Activated CD4-positive, alpha-beta memory T cell treated with anti-CD3 and anti-CD28 coated beads, Interleukin-2, amount 10 ng/mL, durations not matched to agents 7 days and 5 days (primary cell): ENCODE measurements at regions of chr11 and their contacts with region 1.

Region 1: GRCh38 chr11:535519-536454 is at the start of gene HRAS:
- DNase-seq: peak; percentile 96
- H3K4me3 Mint-ChIP-seq: peak within 1 kb of the TSS; percentile 84
- H3K27ac Mint-ChIP-seq: peak within 1 kb of the TSS; percentile 90
- H3K4me1 Mint-ChIP-seq: peaks cover 28% of the 10 kb centered on the region
- H3K27me3 Mint-ChIP-seq: no peaks in the 10 kb centered on the region
- total RNA-seq, gene HRAS: 45.1 to 52.5 TPM

Region 2: GRCh38 chr11:518463-519250 is 17.1 kb before region 1 on chr11:
- CTCF ChIA-PET with region 1: interaction called, 11 read pairs
- POLR2A ChIA-PET with region 1: interaction called, 4 read pairs
- DNase-seq: peak; percentile 94
- H3K4me3 Mint-ChIP-seq: peak overlapping the region; percentile 66
- H3K27ac Mint-ChIP-seq: peak overlapping the region; percentile 47
- H3K4me1 Mint-ChIP-seq: peaks cover 13% of the 10 kb centered on the region
- H3K27me3 Mint-ChIP-seq: no peaks in the 10 kb centered on the region

Region 3: GRCh38 chr11:568306-569157 is 32.7 kb after region 1 on chr11:
- CTCF ChIA-PET with region 1: no interaction called
- POLR2A ChIA-PET with region 1: interaction called, 10 read pairs
- DNase-seq: peak; percentile 96
- H3K4me3 Mint-ChIP-seq: peak overlapping the region; percentile 77
- H3K27ac Mint-ChIP-seq: peak overlapping the region; percentile 62
- H3K4me1 Mint-ChIP-seq: peaks cover 15% of the 10 kb centered on the region
- H3K27me3 Mint-ChIP-seq: no peaks in the 10 kb centered on the region